ENCODE measurements at regions of chr12 and their contacts with region 1.

Region 1: GRCh38 chr12:3135522-3136461 is 58.6 kb downstream of the TSPAN9 start:
- DNase-seq: peak; percentile 80
- ATAC-seq: peak; percentile 71
- H3K4me3 ChIP-seq: no peak overlapping the region
- H3K27ac ChIP-seq: no peak overlapping the region
- H3K4me1 ChIP-seq: peaks cover 19% of the 10 kb centered on the region
- H3K27me3 ChIP-seq: no peaks in the 10 kb centered on the region
- CTCF ChIP-seq: peak; percentile 83
- POLR2A ChIP-seq: no peak
- RAD21 ChIP-seq: peak; percentile 97

Region 2: GRCh38 chr12:3073438-3074250 is 62.1 kb before region 1 on chr12:
- CTCF ChIA-PET with region 1: interaction called, 3 read pairs
- POLR2A ChIA-PET with region 1: no interaction called
- dilution Hi-C with region 1: no loop called
- in situ Hi-C with region 1: no loop called
- intact Hi-C with region 1: loop called (anchors 1 kb)
- DNase-seq: peak; percentile 92
- ATAC-seq: peak; percentile 32
- H3K4me3 ChIP-seq: no peak overlapping the region
- H3K27ac ChIP-seq: no peak overlapping the region
- H3K4me1 ChIP-seq: peaks cover 14% of the 10 kb centered on the region
- H3K27me3 ChIP-seq: peaks cover 5% of the 10 kb centered on the region; the same call in 1 of the 2 replicates
- CTCF ChIP-seq: peak; percentile 97
- POLR2A ChIP-seq: no peak
- RAD21 ChIP-seq: peak; percentile 95

Region 3: DNA sequence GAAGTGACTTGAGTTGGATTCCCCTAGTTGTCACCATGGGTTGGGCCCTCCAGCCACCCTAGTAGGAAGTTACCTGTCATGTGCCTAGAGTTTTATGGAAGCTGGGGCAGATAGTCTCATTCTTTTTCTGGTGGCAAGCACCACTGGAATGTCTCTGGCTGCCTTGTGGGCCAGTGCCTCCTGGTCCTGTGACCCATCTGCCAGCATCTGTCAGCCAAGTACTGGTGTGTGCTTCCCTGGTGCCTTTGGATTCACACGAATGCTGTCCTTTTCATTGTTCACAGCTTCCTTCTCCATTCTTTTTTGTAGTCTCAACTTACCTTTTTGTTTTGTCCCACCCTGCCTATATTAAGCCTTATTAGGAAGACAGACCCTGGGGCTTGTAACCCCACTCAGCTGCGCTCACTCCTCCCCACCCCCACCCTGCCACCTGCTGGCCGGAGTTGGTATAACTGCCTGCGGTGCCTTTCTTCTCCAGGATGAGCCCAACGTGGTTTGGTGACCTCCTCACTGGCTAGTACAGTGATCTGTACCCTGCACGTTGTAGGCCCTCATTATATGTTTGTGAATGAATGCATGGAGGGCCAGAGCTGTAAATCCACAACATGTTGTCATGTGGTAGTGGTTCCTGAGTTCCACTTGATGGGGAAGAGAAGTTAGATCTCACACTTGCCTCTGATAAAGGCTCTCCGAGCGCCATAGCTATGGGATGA is 67.1 kb after region 1 on chr12:
- CTCF ChIA-PET with region 1: interaction called, 6 read pairs
- POLR2A ChIA-PET with region 1: no interaction called
- dilution Hi-C with region 1: no loop called
- in situ Hi-C with region 1: loop called (anchors 5 kb)
- intact Hi-C with region 1: loop called (anchors 1 kb)
- DNase-seq: peak; percentile 34
- ATAC-seq: peak; percentile 30
- H3K4me3 ChIP-seq: no peak overlapping the region
- H3K27ac ChIP-seq: no peak overlapping the region
- H3K4me1 ChIP-seq: peaks cover 8% of the 10 kb centered on the region
- H3K27me3 ChIP-seq: peaks cover 6% of the 10 kb centered on the region
- CTCF ChIP-seq: peak; percentile 86
- POLR2A ChIP-seq: no peak
- RAD21 ChIP-seq: peak; percentile 68

Region 4: GRCh38 chr12:3218228-3219171 is 82.7 kb after region 1 on chr12:
- CTCF ChIA-PET with region 1: no interaction called
- POLR2A ChIA-PET with region 1: no interaction called
- dilution Hi-C with region 1: no loop called
- in situ Hi-C with region 1: no loop called
- intact Hi-C with region 1: loop called (anchors 5 kb)
- DNase-seq: peak; percentile 78
- ATAC-seq: peak; percentile 87
- H3K4me3 ChIP-seq: no peak overlapping the region
- H3K27ac ChIP-seq: peak overlapping the region; percentile 18
- H3K4me1 ChIP-seq: peaks cover 21% of the 10 kb centered on the region
- H3K27me3 ChIP-seq: no peaks in the 10 kb centered on the region
- CTCF ChIP-seq: no peak
- POLR2A ChIP-seq: no peak
- RAD21 ChIP-seq: no peak

Region 5: DNA sequence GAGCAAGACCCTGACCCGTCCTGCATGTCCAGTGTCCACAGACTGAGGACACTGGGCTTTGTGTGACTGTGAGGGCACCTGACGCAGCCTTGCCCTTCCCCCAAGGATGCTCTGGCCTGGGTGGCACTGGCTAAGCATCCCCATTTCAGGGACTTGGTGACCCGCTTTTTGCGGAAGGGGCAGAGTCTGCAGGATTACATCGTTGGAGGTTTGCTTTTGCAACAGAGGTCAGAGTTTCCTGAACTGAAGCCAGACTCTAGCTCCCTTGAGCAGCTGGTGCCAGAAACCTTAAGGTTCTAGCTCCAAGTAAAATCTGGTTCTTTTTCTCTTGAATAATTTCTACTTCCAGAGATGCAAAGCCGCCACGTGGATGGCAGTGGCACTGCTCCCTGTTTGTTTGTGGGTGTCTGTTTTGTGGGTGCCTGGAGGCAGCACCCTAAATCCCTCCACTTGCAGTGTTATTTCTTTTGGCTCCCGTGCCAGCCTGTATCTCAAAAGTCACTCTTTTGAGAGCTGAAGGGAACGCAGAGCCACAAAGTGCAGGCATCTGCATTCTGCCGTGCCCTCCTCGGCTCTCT is 126.1 kb after region 1 on chr12:
- CTCF ChIA-PET with region 1: no interaction called
- POLR2A ChIA-PET with region 1: no interaction called
- dilution Hi-C with region 1: no loop called
- in situ Hi-C with region 1: no loop called
- intact Hi-C with region 1: loop called (anchors 1 kb)
- DNase-seq: peak; percentile 28
- ATAC-seq: no peak; the same call in 1 of the 2 replicates
- H3K4me3 ChIP-seq: no peak overlapping the region
- H3K27ac ChIP-seq: no peak overlapping the region
- H3K4me1 ChIP-seq: peaks cover 5% of the 10 kb centered on the region; the same call in 1 of the 2 replicates
- H3K27me3 ChIP-seq: no peaks in the 10 kb centered on the region; the same call in 1 of the 2 replicates
- CTCF ChIP-seq: 0 out of 2 replicates have a peak, but pooled peaks have one; percentile 3
- POLR2A ChIP-seq: no peak
- RAD21 ChIP-seq: no peak

Region 6: GRCh38 chr12:3275171-3276041 is 139.6 kb after region 1 on chr12:
- CTCF ChIA-PET with region 1: interaction called, 31 read pairs
- POLR2A ChIA-PET with region 1: no interaction called
- dilution Hi-C with region 1: no loop called
- in situ Hi-C with region 1: loop called (anchors 5 kb)
- intact Hi-C with region 1: loop called (anchors 1 kb)
- DNase-seq: peak; percentile 66
- ATAC-seq: peak; percentile 89
- H3K4me3 ChIP-seq: no peak overlapping the region
- H3K27ac ChIP-seq: no peak overlapping the region
- H3K4me1 ChIP-seq: 0 out of 2 replicates have a peak, but pooled peaks cover 2% of the 10 kb centered on the region
- H3K27me3 ChIP-seq: no peaks in the 10 kb centered on the region
- CTCF ChIP-seq: peak; percentile 98
- POLR2A ChIP-seq: peak; percentile 52; the same call in 1 of the 2 replicates
- RAD21 ChIP-seq: peak; percentile 98

Region 7: DNA sequence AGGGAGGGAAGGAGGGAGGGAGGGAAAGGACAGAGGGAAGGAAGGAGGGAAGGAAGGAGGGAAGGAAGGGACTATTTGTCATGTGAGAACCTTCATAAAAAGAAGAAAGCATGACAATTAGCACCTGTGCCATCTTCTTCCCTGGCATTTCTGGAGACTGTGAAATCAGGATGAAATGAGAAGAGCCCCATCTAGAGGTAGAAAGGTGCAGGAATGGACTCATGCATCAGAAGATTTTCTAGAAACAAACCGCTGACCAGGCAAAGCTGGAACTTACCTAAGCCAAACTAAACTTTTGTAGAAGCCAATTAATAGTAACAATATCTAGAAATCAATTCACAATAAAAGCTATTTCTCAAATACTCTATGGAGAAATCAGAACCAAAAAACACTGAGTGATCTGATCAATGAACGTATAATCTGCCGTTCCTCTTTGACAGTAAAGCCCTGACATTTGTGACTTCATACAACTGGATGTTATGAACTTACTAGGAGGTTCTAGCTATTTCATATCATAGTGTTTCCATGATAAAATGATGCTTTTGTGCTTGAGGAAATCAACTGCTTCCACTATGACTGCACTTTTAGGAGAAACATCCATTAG is 641.5 kb after region 1 on chr12:
- CTCF ChIA-PET with region 1: no interaction called
- POLR2A ChIA-PET with region 1: no interaction called
- dilution Hi-C with region 1: no loop called
- in situ Hi-C with region 1: no loop called
- intact Hi-C with region 1: loop called (anchors 10 kb)
- DNase-seq: peak; percentile 43
- ATAC-seq: peak; percentile 80
- H3K4me3 ChIP-seq: no peak overlapping the region
- H3K27ac ChIP-seq: no peak overlapping the region
- H3K4me1 ChIP-seq: no peaks in the 10 kb centered on the region
- H3K27me3 ChIP-seq: peaks cover 9% of the 10 kb centered on the region
- CTCF ChIP-seq: peak; percentile 74
- POLR2A ChIP-seq: 0 out of 2 replicates have a peak, but pooled peaks have one; percentile 31
- RAD21 ChIP-seq: peak; percentile 79

Measured in IMR-90 (cell line).